HepG2 (cell line): ENCODE measurements at regions of chr13 and their contacts with region 1.

Region 1: DNA sequence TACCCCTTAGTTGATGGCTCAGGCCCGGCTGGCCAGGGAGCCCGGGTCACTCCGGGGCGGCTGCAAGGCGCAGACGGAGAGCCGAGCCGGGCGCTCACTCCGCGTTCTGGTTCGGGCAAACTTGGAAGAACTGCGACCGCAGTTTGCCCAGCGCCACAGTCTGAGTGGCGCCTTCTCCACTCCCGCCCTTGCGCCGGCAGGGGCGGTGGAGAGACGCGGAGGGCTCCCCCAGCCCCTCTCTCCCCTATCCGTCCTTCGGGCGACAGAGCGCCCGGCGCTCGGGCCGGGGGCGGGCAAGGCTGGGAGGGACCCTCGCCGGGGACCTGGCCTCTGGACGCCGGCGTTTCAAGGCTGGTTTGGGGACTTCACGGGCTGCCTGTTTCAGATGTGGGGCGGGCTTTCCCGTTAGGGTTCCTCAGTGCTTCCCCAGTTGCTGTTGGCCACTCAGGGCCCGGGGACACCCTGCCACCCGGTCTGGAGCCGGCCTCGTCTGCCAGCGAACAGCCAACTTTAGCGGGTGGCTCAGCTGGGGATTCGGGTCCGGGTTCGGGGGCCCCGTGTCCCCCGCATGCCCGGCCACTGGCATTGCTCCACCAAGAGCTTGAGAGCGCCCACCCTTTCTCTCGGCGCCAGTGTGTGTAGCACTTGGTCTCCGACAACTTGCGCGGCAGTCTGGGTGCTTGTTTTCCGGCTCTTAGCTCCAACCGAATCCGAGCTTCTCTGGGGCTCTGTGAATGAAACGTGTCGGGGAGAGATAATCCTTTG is 1.5 kb downstream of the GPC6 start:
- DNase-seq: peak; percentile 80
- ATAC-seq: peak; percentile 88
- H3K4me3 ChIP-seq: peak overlapping the region; percentile 90 to 98 (median 94)
- H3K27ac ChIP-seq: peak overlapping the region; percentile 85
- H3K4me1 ChIP-seq: peaks cover 69% of the 10 kb centered on the region
- H3K27me3 ChIP-seq: no peaks in the 10 kb centered on the region; a peak in 1 of 5 replicates
- CTCF ChIP-seq: peak; percentile 62
- EP300 ChIP-seq: peak in 1 of 2 experiments; percentile 38; a peak in 1 of 4 replicates
- POLR2A ChIP-seq: peak in 1 of 2 experiments; percentile 47; a peak in 2 of 4 replicates
- RAD21 ChIP-seq: peak; percentile 42

Region 2: GRCh38 chr13:93169980-93170379 is 58.1 kb before region 1 on chr13:
- CTCF ChIA-PET with region 1: no interaction called
- POLR2A ChIA-PET with region 1: no interaction called
- in situ Hi-C with region 1: no loop called
- intact Hi-C with region 1: loop called (anchors 5 kb)
- DNase-seq: peak; percentile 18
- ATAC-seq: peak; percentile 36; the same call in 1 of the 3 replicates
- H3K4me3 ChIP-seq: no peak overlapping the region
- H3K27ac ChIP-seq: no peak overlapping the region
- H3K4me1 ChIP-seq: no peaks in the 10 kb centered on the region
- H3K27me3 ChIP-seq: no peaks in the 10 kb centered on the region
- CTCF ChIP-seq: no peak
- EP300 ChIP-seq: no peak
- POLR2A ChIP-seq: no peak
- RAD21 ChIP-seq: no peak

Region 3: DNA sequence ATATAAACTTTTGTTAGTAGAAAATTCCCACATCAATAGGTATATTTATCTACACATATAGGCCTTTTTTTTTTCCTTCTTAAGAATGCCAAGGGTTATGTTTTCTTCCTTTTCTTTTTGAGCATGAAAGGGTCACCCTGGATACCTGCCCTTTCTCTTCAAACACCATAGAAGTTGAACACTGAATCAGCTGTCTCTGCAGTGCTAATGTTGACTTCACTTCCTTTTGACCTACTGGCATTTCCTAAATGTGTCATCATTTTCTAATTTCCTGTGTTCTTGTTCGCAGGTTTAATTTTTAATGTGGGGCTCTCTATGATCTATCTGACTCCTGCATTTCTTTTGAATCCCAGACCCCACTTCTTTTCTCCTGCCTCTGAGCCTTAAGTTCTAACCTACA is 530.5 kb after region 1 on chr13:
- CTCF ChIA-PET with region 1: no interaction called
- POLR2A ChIA-PET with region 1: no interaction called
- in situ Hi-C with region 1: loop called (anchors 25 kb)
- intact Hi-C with region 1: no loop called
- DNase-seq: peak; percentile 13
- ATAC-seq: no peak
- H3K4me3 ChIP-seq: no peak overlapping the region
- H3K27ac ChIP-seq: no peak overlapping the region
- H3K4me1 ChIP-seq: peaks cover 28% of the 10 kb centered on the region
- H3K27me3 ChIP-seq: no peaks in the 10 kb centered on the region
- CTCF ChIP-seq: no peak
- EP300 ChIP-seq: no peak
- POLR2A ChIP-seq: no peak
- RAD21 ChIP-seq: no peak

Region 4: DNA sequence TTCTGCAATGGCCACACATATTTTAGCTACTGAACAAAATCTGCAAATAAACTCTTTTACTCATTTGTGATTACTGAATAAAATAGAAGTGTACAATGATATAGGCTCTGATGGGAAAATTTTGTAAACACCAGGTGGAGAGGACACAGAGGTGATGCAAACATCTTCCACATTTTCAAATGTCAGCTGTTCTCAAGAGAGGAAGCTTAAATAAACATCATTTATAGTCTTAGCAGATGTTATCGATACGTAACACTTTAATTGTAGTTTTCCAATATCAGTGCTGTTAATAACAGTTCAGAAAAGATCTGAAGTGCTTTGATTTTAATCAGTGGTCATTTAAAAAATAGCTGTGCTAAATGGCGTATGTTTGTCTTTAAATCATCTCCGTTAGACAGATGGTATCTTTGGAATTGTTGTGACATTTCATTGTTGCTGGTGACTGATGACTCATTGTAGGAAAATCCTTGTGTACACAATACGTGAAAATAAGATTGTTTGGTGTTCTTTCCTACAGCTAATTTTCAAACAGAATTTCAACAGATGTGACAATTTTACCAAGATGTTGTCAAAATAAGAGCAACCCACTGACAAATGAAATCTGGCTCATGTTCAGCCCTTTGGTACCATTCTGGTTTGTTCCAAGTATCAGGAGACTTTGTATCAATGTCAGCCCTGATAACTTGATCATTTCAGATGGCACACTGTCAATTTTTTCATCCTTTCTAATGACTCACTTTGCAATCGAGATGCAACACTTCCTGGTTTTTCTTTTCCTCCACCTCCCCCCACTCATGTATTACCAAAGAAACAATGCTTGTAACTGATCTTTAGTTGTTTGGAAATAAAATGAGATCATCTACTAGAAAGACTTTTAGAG is 735.4 kb after region 1 on chr13:
- CTCF ChIA-PET with region 1: no interaction called
- POLR2A ChIA-PET with region 1: interaction called, 3 read pairs
- in situ Hi-C with region 1: no loop called
- intact Hi-C with region 1: loop called (anchors 10 kb)
- DNase-seq: peak; percentile 83
- ATAC-seq: peak; percentile 61
- H3K4me3 ChIP-seq: no peak overlapping the region; a peak in 2 of 6 replicates
- H3K27ac ChIP-seq: peak overlapping the region; percentile 39
- H3K4me1 ChIP-seq: peaks cover 52% of the 10 kb centered on the region
- H3K27me3 ChIP-seq: no peaks in the 10 kb centered on the region
- CTCF ChIP-seq: no peak
- EP300 ChIP-seq: peak in 1 of 2 experiments; percentile 84; a peak in 2 of 4 replicates
- POLR2A ChIP-seq: no peak
- RAD21 ChIP-seq: no peak

Region 5: GRCh38 chr13:94112227-94112626 is 884.2 kb after region 1 on chr13:
- CTCF ChIA-PET with region 1: no interaction called
- POLR2A ChIA-PET with region 1: no interaction called
- in situ Hi-C with region 1: no loop called
- intact Hi-C with region 1: loop called (anchors 10 kb)
- DNase-seq: peak; percentile 28
- ATAC-seq: peak; percentile 71
- H3K4me3 ChIP-seq: no peak overlapping the region
- H3K27ac ChIP-seq: no peak overlapping the region
- H3K4me1 ChIP-seq: peaks cover 10% of the 10 kb centered on the region
- H3K27me3 ChIP-seq: no peaks in the 10 kb centered on the region
- CTCF ChIP-seq: no peak
- EP300 ChIP-seq: no peak
- POLR2A ChIP-seq: no peak
- RAD21 ChIP-seq: no peak

Region 6: GRCh38 chr13:94192431-94192975 is 964.4 kb after region 1 on chr13:
- CTCF ChIA-PET with region 1: no interaction called
- POLR2A ChIA-PET with region 1: no interaction called
- in situ Hi-C with region 1: loop called (anchors 25 kb)
- intact Hi-C with region 1: loop called (anchors 5 kb)
- DNase-seq: peak; percentile 30
- ATAC-seq: peak; percentile 79
- H3K4me3 ChIP-seq: no peak overlapping the region
- H3K27ac ChIP-seq: no peak overlapping the region
- H3K4me1 ChIP-seq: no peaks in the 10 kb centered on the region
- H3K27me3 ChIP-seq: no peaks in the 10 kb centered on the region; a peak in 1 of 5 replicates
- CTCF ChIP-seq: peak; percentile 64
- EP300 ChIP-seq: no peak
- POLR2A ChIP-seq: no peak
- RAD21 ChIP-seq: peak; percentile 62

Region 7: DNA sequence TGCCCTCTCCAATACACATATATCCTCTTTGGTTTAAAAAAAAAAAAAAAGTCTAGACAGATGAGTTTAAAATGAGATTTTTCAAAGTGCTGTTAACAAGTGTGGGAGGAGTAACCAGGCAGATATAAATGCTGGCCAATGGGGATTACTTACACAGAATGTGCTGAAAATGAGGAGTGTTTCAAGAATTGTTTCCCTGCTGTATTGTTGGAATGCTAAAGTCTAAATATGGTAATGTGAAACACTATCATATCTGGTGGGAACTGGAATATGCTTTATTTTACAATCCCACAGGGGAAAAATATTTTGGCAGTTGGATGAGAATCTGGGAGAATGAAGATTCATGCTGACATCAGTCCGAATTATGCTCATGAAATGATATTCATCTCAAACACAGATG is 1000.7 kb after region 1 on chr13:
- CTCF ChIA-PET with region 1: no interaction called
- POLR2A ChIA-PET with region 1: no interaction called
- in situ Hi-C with region 1: no loop called
- intact Hi-C with region 1: no loop called
- DNase-seq: no peak
- ATAC-seq: no peak
- H3K4me3 ChIP-seq: no peak overlapping the region
- H3K27ac ChIP-seq: no peak overlapping the region
- H3K4me1 ChIP-seq: no peaks in the 10 kb centered on the region
- H3K27me3 ChIP-seq: no peaks in the 10 kb centered on the region
- CTCF ChIP-seq: no peak
- EP300 ChIP-seq: no peak
- POLR2A ChIP-seq: no peak
- RAD21 ChIP-seq: no peak

Region 8: GRCh38 chr13:94345374-94346195 is 1117.5 kb after region 1 on chr13:
- CTCF ChIA-PET with region 1: no interaction called
- POLR2A ChIA-PET with region 1: no interaction called
- in situ Hi-C with region 1: loop called (anchors 25 kb)
- intact Hi-C with region 1: no loop called
- DNase-seq: peak; percentile 22
- ATAC-seq: peak; percentile 65
- H3K4me3 ChIP-seq: no peak overlapping the region
- H3K27ac ChIP-seq: no peak overlapping the region
- H3K4me1 ChIP-seq: peaks cover 22% of the 10 kb centered on the region
- H3K27me3 ChIP-seq: no peaks in the 10 kb centered on the region
- CTCF ChIP-seq: peak; percentile 59
- EP300 ChIP-seq: no peak
- POLR2A ChIP-seq: no peak
- RAD21 ChIP-seq: peak; percentile 23; the same call in 1 of the 2 replicates